WTC11 (cell line): ENCODE measurements at regions of chr3 and their contacts with region 1.

Region 1: DNA sequence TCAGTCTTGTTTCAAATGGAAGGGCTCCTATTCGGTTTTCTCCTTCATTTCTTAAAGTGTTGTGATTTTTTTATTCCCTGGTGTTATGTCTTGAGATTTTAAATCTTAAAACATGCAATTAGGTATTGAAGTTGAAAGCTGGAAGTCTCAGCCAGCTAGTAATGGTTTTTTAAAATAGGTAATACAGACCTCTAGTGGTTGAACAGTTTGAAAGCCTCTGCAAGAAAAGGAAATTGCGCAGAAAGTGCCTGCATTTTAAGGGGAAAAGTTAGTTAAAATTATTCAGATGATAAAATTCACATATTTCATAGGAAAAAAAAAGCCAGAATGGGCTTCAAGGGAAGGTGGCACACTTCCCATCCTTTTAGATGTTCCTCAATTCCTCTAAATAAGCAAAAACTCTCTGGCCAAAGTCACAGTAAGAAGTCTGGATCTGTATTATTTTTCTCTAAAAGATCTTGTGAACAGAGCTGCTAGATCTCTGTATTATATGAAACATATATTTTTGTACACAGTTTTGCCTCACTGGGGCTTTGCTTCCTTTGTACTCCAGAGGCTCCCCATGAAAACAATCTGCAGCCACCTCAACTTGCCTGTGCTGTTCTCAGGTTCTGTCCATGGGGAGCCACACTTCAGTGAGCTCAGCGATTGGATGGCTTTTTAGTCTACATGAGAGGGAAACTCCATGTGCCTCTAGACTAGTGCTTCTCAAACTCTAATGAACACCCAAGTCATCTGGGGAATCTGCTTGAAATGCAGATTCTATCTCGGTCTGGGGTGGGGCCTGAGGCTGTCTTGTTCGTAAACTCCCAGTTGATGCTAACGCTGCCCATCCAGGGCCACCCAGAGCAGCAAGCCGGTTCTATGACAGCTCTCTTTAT is 21.5 kb downstream of the AGTR1 start:
- DNase-seq: peak; percentile 16
- ATAC-seq: peak; percentile 96
- H3K4me3 Mint-ChIP-seq: no peak overlapping the region
- H3K27ac Mint-ChIP-seq: no peak overlapping the region
- H3K4me1 Mint-ChIP-seq: peaks cover 14% of the 10 kb centered on the region
- H3K27me3 Mint-ChIP-seq: no peaks in the 10 kb centered on the region
- CTCF ChIP-seq: no peak

Region 2: DNA sequence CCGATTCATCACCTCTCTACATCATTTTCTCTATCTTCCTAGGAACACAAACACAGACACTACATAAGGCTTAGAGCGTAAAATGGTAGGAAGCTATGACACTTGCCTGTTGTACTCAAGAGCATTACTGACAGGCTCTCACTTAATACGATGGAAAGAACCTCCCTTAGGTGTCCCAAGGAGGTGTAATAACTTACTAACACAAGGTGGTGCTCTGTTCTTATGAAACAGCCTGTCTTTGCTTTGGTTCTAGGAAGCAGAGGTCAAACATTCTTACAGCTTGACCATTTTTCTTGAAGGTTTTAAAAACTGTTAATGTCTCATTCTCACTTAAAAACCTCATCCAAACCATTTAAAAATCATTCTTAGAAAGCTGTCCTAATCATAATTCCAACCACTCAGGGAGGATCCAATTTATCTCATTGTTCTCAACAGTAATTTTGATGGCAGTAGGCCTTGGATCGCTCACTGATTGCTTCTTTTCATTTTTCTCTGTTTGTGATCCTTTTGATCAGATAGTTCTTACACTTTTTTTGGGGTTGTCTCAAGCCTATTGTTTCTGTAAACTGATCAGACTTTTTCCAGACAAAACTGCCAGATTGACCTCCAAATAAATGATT is 339.3 kb before region 1 on chr3:
- CTCF ChIA-PET with region 1: interaction called, 19 read pairs
- POLR2A ChIA-PET with region 1: no interaction called
- DNase-seq: no peak
- ATAC-seq: peak; percentile 99
- H3K4me3 Mint-ChIP-seq: no peak overlapping the region
- H3K27ac Mint-ChIP-seq: 0 out of 2 replicates have a peak overlapping the region, but pooled peaks have one; percentile 77
- H3K4me1 Mint-ChIP-seq: 0 out of 2 replicates have a peak, but pooled peaks cover 3% of the 10 kb centered on the region
- H3K27me3 Mint-ChIP-seq: no peaks in the 10 kb centered on the region
- CTCF ChIP-seq: peak; percentile 45